Spleen (tissue), 13 donors: ENCODE measurements at regions of chr1 and their contacts with region 1.

Region 1: GRCh38 chr1:86370601-86371022 is 25.5 kb downstream of the ODF2L start:
- DNase-seq: no peak
- H3K4me3 ChIP-seq: no peak overlapping the region
- H3K27ac ChIP-seq: no peak overlapping the region
- H3K4me1 ChIP-seq: no peaks in the 10 kb centered on the region
- H3K27me3 ChIP-seq: no peaks in the 10 kb centered on the region
- CTCF ChIP-seq: no peak
- POLR2A ChIP-seq: no peak

Region 2: GRCh38 chr1:86499987-86500593 is 129.5 kb after region 1 on chr1:
- intact Hi-C with region 1: loop called (anchors 10 kb)
- DNase-seq: no peak
- H3K4me3 ChIP-seq: no peak overlapping the region
- H3K27ac ChIP-seq: no peak overlapping the region
- H3K4me1 ChIP-seq: peaks cover 0 to 32% (median 12%) of the 10 kb centered on the region in 6 donors
- H3K27me3 ChIP-seq: peaks cover 0 to 4% (median 0%) of the 10 kb centered on the region in 7 donors
- CTCF ChIP-seq: peak; percentile 68 to 90 (median 83)
- POLR2A ChIP-seq: no peak

Region 3: GRCh38 chr1:86696522-86696921 is 325.9 kb after region 1 on chr1:
- intact Hi-C with region 1: loop called (anchors 10 kb)
- DNase-seq: no peak
- H3K4me3 ChIP-seq: no peak overlapping the region
- H3K27ac ChIP-seq: no peak overlapping the region
- H3K4me1 ChIP-seq: no peaks in the 10 kb centered on the region
- H3K27me3 ChIP-seq: no peaks in the 10 kb centered on the region
- CTCF ChIP-seq: no peak
- POLR2A ChIP-seq: no peak